ENCODE measurements at regions of chr12 and their contacts with region 1.

Region 1: DNA sequence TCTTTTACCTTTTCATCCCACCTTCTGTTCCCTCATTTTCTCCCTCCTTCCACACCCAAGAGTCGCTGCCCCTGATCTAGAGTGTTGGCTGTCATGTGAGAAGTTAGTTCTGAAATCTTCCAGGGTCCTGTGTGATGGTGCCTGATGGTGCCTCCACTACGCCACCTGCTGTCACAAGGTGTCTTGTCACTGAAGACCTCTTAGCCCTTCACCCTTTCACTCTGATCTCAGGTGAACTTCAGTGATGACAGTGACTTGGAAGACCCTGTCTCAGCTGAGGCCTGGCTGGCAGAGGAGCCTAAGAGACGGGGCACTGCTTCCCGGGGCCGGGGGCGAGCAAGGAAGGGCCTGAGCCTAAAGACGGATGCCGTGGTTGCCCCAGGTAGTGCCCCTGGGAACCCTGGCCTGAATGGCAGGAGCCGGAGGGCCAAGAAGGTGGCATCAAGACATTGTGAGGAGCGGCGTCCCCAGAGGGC is 7.6 kb upstream of the PFDN5 start:
- DNase-seq: peak; percentile 37 to 73
- H3K4me3 ChIP-seq: no peak overlapping the region
- H3K4me1 ChIP-seq: no peaks in the 10 kb centered on the region
- H3K27me3 ChIP-seq: no peaks in the 10 kb centered on the region

Region 2: GRCh38 chr12:53065975-53066931 is 221.5 kb before region 1 on chr12:
- in situ Hi-C with region 1: loop called (anchors 10 kb)
- DNase-seq: peak; percentile 67 to 88
- H3K4me3 ChIP-seq: no peak overlapping the region
- H3K4me1 ChIP-seq: no peaks in the 10 kb centered on the region
- H3K27me3 ChIP-seq: peaks cover 2% of the 10 kb centered on the region; the same call in 1 of the 2 replicates

Region 3: DNA sequence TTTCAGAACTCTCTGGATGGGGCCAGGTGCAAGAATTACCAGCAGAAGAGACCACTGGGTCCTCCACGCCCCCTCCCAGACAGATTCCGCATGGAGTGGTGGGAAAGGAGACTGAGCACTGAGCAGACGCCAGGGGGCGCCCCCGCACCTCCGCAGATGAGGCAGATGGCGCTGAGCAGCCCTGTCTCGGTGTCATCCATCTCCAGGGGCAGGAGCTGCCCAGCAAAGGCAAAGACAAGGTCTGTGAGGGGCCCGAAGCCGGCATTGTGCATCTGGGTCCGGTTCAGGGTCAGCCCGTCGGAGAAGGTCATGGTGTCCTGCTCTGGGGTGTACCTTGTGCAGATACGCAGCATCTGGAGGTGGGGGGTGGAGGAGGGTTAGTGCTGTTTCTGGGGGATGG is 74.4 kb before region 1 on chr12:
- in situ Hi-C with region 1: loop called (anchors 5 kb)
- DNase-seq: peak; percentile 73 to 92
- H3K4me3 ChIP-seq: no peak overlapping the region
- H3K4me1 ChIP-seq: peaks cover 18% of the 10 kb centered on the region
- H3K27me3 ChIP-seq: no peaks in the 10 kb centered on the region

Region 4: DNA sequence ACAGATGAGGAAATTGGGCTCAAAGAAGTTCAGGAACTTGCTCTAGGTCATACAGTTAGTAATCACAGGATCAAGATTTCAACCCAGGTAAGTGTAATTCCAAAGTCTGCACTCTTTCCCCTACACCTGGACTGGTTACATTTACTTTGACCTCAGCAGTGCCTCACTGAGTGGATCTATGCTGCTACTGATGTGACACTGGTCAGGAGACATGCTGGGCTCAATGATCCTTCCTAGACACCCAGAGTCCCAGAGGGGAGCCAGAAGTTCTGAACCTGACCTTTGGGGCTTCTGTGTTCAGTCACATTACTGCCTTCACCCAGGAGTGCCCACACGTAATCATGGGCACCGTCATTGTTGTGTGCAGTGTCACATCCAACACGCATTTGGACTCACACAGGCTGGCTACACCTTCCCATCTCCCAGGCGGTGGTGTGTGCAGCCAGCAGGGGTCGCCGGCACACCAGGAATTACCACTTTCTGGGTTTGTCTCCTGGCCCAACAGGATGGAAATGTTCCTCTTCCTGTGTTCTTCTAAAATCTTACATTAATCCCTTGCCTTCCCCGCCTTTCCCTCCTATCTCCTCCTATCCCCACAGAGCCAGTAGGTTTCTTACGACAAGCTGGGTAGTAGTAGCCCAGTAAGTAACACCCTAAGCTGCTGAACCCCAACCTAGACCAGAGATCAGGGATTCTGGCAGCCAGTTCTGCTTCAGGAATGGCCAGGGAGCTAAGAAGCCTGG is 413.9 kb after region 1 on chr12:
- in situ Hi-C with region 1: no loop called
- DNase-seq: peak; percentile 66 to 90
- H3K4me3 ChIP-seq: no peak overlapping the region
- H3K4me1 ChIP-seq: peaks cover 2% of the 10 kb centered on the region
- H3K27me3 ChIP-seq: peaks cover 73% of the 10 kb centered on the region